Panc1 (cell line): ENCODE measurements at regions of chr17 and their contacts with region 1.

Region 1: GRCh38 chr17:42920922-42921321 is 20.3 kb downstream of the G6PC1 start:
- DNase-seq: no peak
- ATAC-seq: no peak
- H3K4me3 ChIP-seq: no peak overlapping the region
- H3K27ac ChIP-seq: no peak overlapping the region
- H3K4me1 ChIP-seq: no peaks in the 10 kb centered on the region
- H3K27me3 ChIP-seq: no peaks in the 10 kb centered on the region
- CTCF ChIP-seq: no peak

Region 2: DNA sequence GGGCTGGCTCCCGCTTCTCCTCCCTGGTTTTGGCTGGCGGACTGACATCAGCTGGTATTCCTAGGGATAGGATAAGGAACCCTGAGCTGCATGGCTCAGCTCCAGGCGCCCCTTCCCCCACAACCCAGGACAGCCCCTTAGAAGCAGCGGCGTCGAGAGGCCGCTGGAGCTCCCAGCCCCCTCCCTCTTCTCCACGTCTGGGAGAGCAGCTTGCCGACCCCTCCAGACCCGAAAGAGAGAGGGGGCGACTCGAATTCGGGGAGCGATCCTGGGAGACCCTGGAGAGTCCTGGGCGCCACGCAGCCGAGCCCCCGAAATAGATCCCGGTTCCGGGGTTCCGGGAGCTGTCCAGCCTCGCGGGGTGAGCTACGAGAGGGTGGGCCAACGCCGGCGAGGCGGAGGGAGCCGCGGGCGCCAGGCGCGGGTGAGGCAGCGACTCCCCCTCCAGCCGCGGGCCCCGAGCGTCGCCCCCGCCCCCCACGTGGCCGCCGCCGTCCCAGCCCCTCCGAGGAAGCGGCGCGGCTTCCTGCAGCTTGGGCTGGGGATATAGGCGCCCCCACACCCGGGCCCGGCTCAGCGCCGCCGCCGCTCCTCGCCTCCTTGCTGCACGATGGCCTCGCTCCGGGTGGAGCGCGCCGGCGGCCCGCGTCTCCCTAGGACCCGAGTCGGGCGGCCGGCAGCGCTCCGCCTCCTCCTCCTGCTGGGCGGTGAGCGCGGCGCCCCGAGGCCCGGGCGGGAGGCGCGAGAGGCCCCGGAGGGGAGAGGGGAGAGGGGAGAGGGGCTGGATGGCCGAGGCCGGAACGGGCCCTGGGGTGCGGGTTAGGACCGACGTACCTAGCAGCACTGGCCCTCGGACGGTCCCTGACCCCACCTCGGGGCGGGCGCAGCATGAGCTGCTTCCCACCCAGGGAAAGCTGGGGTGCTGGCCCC is 160.0 kb before region 1 on chr17 and contains the start of gene RAMP2:
- CTCF ChIA-PET with region 1: no interaction called
- POLR2A ChIA-PET with region 1: interaction called, 12 read pairs
- in situ Hi-C with region 1: no loop called
- intact Hi-C with region 1: no loop called
- DNase-seq: no peak
- ATAC-seq: peak; percentile 58
- H3K4me3 ChIP-seq: peak within 1 kb of the TSS; percentile 26 to 28; a peak in 3 of 4 replicates
- H3K27ac ChIP-seq: no peak within 1 kb of the TSS
- H3K4me1 ChIP-seq: no peaks in the 10 kb centered on the region
- H3K27me3 ChIP-seq: no peaks in the 10 kb centered on the region
- CTCF ChIP-seq: no peak
- total RNA-seq, gene RAMP2: 1.1 TPM